Endothelial cell of umbilical vein (primary cell): ENCODE measurements at regions of chr6 and their contacts with region 1.

Region 1: GRCh38 chr6:67630146-67630545 is 1004.9 kb upstream of the ADGRB3 start:
- DNase-seq: peak; percentile 53
- H3K4me3 ChIP-seq: no peak overlapping the region
- H3K27ac ChIP-seq: peak overlapping the region; percentile 62
- H3K4me1 ChIP-seq: peaks cover 16% of the 10 kb centered on the region
- H3K27me3 ChIP-seq: no peaks in the 10 kb centered on the region
- CTCF ChIP-seq: no peak
- POLR2A ChIP-seq: no peak

Region 2: DNA sequence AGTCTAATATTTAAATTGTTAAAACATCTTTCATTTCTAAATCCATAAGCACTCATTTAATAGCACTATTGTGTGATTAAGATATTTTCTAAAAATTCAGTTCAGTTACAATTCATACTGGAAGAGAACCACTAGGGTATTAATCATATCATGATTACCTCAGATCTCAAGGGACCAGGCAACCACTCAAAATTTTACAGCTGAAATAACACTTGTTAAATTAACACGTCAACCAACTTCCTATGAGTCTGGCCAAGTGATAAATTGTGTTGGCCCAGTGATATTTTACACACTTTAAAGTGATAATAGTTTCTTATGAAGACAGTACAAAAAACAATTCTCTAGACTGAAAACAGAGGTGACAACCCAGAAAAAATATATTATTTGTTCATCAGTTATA is 135.9 kb after region 1 on chr6:
- CTCF ChIA-PET with region 1: no interaction called
- POLR2A ChIA-PET with region 1: no interaction called
- dilution Hi-C with region 1: no loop called
- intact Hi-C with region 1: loop called (anchors 5 kb)
- DNase-seq: peak; percentile 72
- H3K4me3 ChIP-seq: no peak overlapping the region
- H3K27ac ChIP-seq: peak overlapping the region; percentile 40
- H3K4me1 ChIP-seq: peaks cover 6% of the 10 kb centered on the region
- H3K27me3 ChIP-seq: no peaks in the 10 kb centered on the region
- CTCF ChIP-seq: no peak
- POLR2A ChIP-seq: no peak

Region 3: GRCh38 chr6:67854098-67854497 is 224.0 kb after region 1 on chr6:
- CTCF ChIA-PET with region 1: no interaction called
- POLR2A ChIA-PET with region 1: no interaction called
- dilution Hi-C with region 1: no loop called
- intact Hi-C with region 1: no loop called
- DNase-seq: no peak
- H3K4me3 ChIP-seq: no peak overlapping the region
- H3K27ac ChIP-seq: no peak overlapping the region
- H3K4me1 ChIP-seq: no peaks in the 10 kb centered on the region
- H3K27me3 ChIP-seq: no peaks in the 10 kb centered on the region
- CTCF ChIP-seq: no peak
- POLR2A ChIP-seq: no peak